Esophagus squamous epithelium (tissue), 5 donors: ENCODE measurements at regions of chr4 and their contacts with region 1.

Region 1: DNA sequence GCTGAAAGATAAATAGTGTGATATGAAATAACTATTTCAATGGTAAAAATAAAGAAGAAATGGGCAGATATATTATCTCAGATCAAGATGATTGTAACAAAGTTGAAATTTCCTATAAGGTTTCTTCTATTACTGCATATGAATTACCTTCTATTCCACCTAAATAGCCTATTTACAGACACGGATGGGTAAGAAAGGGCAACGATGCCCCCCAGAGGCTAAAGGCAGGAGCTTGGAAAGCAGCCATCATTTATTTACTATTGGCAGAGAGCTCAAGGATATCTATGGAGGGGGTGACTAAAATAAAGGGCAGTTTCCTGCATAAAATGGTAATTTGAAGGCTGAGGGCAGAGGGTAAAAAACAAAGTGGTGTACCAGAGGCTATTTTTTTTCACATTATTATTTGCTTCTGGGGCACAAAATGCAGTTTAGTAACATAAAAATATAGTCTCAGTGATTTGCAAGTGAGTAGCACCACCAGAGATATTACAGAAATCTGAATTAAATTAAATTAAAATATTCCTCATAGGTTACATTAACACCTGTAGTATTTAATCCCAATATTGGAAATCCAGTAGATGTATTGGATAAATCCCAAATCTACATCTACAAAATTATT is 123.1 kb downstream of the BTC start:
- DNase-seq: peak; percentile 2
- H3K4me3 ChIP-seq: no peak overlapping the region
- H3K27ac ChIP-seq: no peak overlapping the region
- H3K4me1 ChIP-seq: peaks cover 0 to 9% (median 0%) of the 10 kb centered on the region in 3 donors
- H3K27me3 ChIP-seq: no peaks in the 10 kb centered on the region
- CTCF ChIP-seq: peak; percentile 32 to 81 (median 43)
- POLR2A ChIP-seq: no peak

Region 2: DNA sequence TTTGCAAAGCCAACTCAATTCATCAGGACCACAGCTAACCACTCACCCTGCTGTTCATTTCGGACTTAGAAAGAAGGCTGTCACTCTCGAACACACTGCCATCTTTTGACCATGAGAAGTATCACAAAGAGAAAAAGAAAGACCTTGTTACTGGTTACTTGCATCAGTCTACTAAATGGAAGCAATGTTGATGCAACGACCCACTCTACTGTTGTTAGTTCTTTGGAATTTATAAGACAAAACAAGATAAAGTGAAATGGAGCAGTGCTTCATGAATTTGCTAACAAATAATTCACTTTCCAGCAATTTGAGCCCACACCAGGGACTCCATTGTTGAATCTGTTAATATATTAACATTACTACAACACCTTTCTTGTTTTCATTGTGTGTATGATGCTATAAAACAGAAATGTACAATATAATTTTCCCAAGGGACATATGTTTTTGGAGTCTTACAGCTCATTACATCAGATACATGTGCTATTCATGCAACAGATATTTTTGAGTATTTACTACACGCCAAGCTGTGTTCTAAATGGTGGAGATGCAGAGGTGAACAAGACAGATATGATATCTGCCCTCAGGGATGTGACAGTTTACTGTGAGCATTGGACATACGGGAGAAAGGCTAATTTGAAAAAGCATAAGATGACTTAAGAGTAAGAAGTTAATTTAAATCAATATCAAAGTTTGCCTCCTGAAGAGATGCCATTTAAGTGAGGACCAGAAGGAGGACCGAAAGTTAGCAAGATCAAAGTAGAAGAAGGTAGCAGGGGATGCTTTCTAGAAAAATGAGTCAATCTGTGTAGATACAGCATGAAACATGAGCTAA is 139.0 kb before region 1 on chr4:
- intact Hi-C with region 1: loop called (anchors 5 kb)
- DNase-seq: no peak
- H3K4me3 ChIP-seq: no peak overlapping the region
- H3K27ac ChIP-seq: no peak overlapping the region
- H3K4me1 ChIP-seq: peaks cover 0 to 12% (median 0%) of the 10 kb centered on the region in 3 donors
- H3K27me3 ChIP-seq: no peaks in the 10 kb centered on the region
- CTCF ChIP-seq: peak in 5 of 6 experiments; percentile 22 to 75 (median 56)
- POLR2A ChIP-seq: no peak